ENCODE measurements at regions of chr14 and their contacts with region 1.

Region 1: GRCh38 chr14:68144051-68144681 is 324.6 kb downstream of the RAD51B start:
- DNase-seq: no peak
- ATAC-seq: no peak
- H3K4me3 Mint-ChIP-seq: no peak overlapping the region
- H3K27ac Mint-ChIP-seq: no peak overlapping the region
- H3K4me1 Mint-ChIP-seq: no peaks in the 10 kb centered on the region
- H3K27me3 Mint-ChIP-seq: no peaks in the 10 kb centered on the region
- CTCF ChIP-seq: no peak

Region 2: GRCh38 chr14:68131907-68132306 is 12.3 kb before region 1 on chr14:
- CTCF ChIA-PET with region 1: no interaction called
- POLR2A ChIA-PET with region 1: no interaction called
- intact Hi-C with region 1: loop called (anchors 2 kb)
- DNase-seq: no peak
- ATAC-seq: no peak
- H3K4me3 Mint-ChIP-seq: no peak overlapping the region
- H3K27ac Mint-ChIP-seq: no peak overlapping the region
- H3K4me1 Mint-ChIP-seq: peaks cover 2% of the 10 kb centered on the region
- H3K27me3 Mint-ChIP-seq: no peaks in the 10 kb centered on the region
- CTCF ChIP-seq: no peak

Measured in activated B cell treated with CpG ODN at 0.5 μM for 24 hours (primary cell).